ENCODE measurements at regions of chr11 and their contacts with region 1.

Region 1: DNA sequence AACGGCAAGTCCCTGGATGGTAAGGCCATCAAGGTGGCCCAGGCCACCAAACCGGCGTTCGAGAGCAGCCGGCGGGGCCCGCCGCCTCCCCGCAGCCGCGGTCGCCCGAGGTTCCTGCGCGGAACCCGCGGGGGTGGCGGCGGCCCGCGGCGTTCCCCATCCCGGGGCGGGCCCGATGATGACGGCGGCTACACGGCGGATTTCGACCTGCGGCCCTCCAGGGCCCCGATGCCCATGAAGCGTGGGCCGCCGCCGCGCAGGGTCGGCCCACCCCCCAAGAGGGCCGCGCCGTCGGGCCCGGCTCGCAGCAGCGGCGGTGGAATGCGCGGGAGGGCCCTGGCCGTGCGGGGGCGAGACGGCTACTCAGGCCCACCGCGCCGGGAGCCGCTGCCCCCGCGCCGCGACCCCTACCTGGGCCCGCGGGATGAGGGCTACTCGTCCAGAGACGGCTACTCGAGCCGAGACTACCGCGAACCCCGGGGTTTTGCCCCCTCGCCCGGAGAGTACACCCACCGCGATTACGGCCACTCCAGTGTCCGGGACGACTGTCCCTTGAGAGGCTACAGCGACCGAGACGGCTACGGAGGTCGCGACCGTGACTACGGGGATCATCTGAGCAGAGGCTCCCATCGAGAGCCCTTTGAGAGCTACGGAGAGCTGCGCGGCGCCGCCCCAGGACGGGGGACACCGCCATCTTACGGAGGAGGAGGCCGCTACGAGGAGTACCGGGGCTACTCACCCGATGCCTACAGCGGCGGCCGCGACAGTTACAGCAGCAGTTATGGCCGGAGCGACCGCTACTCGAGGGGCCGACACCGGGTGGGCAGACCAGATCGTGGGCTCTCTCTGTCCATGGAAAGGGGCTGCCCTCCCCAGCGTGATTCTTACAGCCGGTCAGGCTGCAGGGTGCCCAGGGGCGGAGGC is 792 bp downstream of the RBMXL2 start:
- DNase-seq: no peak
- H3K4me3 ChIP-seq: no peak overlapping the region
- H3K27ac ChIP-seq: no peak overlapping the region
- H3K4me1 ChIP-seq: no peaks in the 10 kb centered on the region
- CTCF ChIP-seq: no peak

Region 2: DNA sequence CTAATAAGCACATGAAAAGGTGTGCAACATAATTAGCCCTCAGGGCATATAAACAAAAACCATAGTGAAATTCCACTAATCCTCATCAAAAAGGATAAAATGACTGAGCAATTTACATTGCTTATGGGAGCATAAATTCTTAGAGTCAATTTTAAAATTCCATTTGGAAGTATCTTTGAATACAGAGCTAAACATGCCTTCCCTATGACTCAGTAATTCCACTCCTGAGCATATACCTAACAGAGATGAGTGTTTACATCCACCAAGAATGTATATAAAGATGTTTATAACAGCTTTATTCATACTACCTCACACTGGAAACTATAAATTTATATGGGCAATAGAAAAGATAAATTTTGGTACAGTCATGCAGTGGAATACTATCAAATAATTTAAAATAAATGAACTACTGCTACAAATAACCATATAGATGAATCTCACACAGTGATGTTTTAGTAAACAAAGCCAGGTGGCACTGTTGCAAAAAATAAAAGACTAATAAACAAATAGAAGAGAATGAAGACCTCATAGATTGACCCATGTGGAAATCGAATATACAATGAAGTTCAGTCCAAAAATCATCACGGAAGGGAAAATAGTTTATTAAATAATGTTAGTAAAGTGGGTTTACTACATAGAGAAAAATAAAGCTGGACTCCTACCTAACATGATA is 189.1 kb before region 1 on chr11:
- CTCF ChIA-PET with region 1: no interaction called
- POLR2A ChIA-PET with region 1: no interaction called
- intact Hi-C with region 1: no loop called
- DNase-seq: peak; percentile 6
- H3K4me3 ChIP-seq: no peak overlapping the region
- H3K27ac ChIP-seq: no peak overlapping the region
- H3K4me1 ChIP-seq: no peaks in the 10 kb centered on the region
- CTCF ChIP-seq: peak; percentile 69

Region 3: GRCh38 chr11:7154881-7155361 is 65.3 kb after region 1 on chr11:
- CTCF ChIA-PET with region 1: no interaction called
- POLR2A ChIA-PET with region 1: no interaction called
- intact Hi-C with region 1: no loop called
- DNase-seq: no peak
- H3K4me3 ChIP-seq: no peak overlapping the region
- H3K27ac ChIP-seq: no peak overlapping the region
- H3K4me1 ChIP-seq: no peaks in the 10 kb centered on the region
- CTCF ChIP-seq: no peak

Region 4: GRCh38 chr11:7512525-7513233 is 423.1 kb after region 1 on chr11:
- CTCF ChIA-PET with region 1: no interaction called
- POLR2A ChIA-PET with region 1: no interaction called
- intact Hi-C with region 1: no loop called
- DNase-seq: peak; percentile 91
- H3K4me3 ChIP-seq: peak overlapping the region; percentile 97
- H3K27ac ChIP-seq: peak overlapping the region; percentile 97
- H3K4me1 ChIP-seq: peaks cover 49% of the 10 kb centered on the region
- CTCF ChIP-seq: no peak

Region 5: DNA sequence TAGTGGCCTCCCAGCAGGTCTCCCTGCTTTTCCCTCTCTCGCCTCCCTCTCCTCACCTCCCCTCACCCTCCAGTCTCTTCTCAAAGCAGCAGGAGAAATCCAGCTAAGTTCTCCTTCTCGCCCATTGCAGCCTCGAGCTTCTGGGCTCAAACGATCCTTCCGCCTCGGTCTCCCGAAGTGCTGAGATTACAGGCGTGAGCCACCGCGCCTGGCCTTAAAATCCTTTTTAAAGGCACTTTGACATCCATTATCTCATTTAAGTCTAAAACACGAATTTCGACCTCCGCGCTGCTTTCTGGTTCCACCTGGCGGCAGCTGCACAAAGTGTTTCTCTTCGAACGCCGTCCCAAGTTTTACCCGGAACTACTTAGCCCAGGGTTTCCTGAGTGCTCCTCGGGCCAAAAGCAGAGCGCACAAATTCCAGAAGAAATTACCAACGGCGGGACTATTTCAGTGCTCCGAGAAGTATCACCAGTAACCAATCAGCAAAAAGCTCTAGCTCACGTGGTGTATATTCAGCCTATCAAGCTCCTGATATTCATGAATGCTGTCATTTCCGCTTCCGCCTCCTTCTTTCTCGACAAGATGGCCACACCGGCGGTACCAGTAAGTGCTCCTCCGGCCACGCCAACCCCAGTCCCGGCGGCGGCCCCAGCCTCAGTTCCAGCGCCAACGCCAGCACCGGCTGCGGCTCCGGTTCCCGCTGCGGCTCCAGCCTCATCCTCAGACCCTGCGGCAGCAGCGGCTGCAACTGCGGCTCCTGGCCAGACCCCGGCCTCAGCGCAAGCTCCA is 897.4 kb after region 1 on chr11 and contains the start of gene EIF3F:
- CTCF ChIA-PET with region 1: no interaction called
- POLR2A ChIA-PET with region 1: no interaction called
- intact Hi-C with region 1: loop called (anchors 5 kb)
- DNase-seq: peak; percentile 99
- H3K4me3 ChIP-seq: peak within 1 kb of the TSS; percentile 96
- H3K27ac ChIP-seq: peak within 1 kb of the TSS; percentile 57
- H3K4me1 ChIP-seq: peaks cover 27% of the 10 kb centered on the region
- CTCF ChIP-seq: peak; percentile 89
- total RNA-seq, gene EIF3F: 239 and 376 TPM in 2 replicates